Activated CD4-positive, alpha-beta T cell treated with anti-CD3 and anti-CD28 coated beads for 36 hours (primary cell): ENCODE measurements at regions of chr5 and their contacts with region 1.

Region 1: DNA sequence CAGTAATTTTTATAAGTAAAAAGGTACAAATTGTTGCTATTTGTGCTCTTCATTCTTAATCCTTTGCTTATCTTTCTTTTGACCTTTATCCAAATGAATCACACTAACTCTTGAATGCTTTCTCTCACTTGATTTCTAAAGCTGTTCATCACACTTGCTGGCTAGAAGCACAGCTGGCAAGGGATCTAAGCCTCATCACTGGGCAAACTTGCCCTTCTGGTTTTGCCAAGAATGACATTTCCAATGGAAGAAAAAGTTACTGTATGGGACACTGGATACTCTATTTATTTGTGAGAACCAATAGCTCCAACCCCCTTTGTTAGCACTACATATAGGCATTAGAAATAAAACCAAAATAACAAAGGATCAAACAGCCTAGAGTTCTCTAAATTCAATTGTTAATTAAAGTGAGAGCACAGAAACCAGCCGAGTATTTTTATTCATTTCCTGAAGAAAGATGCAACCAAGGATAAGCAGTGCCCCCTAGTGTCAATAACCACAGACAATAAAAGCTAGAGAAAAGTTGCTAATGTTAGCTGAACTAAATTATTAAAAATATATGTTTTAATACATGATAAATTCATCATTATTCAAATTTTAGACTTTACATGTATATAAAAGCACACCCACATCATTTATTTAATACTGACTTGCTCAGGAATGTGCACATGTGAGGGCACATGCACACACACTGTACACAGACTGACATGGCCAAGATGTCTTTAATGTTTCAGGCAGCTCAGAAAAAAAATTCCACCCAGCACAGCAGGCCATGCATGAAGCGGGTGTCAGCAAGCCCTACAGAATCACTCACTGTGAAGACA is 59.8 kb upstream of the POU5F2 start:
- DNase-seq: peak; percentile 11
- ATAC-seq: no peak
- H3K4me3 Mint-ChIP-seq: no peak overlapping the region
- H3K27ac Mint-ChIP-seq: no peak overlapping the region
- H3K4me1 Mint-ChIP-seq: no peaks in the 10 kb centered on the region
- H3K27me3 Mint-ChIP-seq: no peaks in the 10 kb centered on the region

Region 2: DNA sequence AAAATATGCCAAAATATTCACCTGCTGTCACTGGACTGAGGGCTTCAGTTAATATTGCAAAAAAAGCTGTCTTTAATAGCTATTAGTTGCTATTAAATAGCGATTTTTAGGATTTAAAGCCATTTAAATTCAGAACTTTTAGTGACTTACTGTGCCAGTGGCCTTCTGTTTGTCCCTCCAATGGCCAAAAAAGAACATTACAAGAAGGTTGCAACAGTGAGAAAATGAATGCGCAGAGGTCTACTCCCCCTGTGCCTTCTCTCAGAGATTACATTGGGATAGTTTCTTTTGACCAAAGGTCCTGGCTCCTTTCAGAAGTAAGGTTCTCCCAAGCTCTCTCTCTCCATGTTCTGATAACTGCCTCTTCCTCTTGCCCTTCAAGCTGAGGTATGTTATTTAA is 1487.8 kb before region 1 on chr5:
- CTCF ChIA-PET with region 1: no interaction called
- POLR2A ChIA-PET with region 1: no interaction called
- intact Hi-C with region 1: loop called in 1 of 2 experiments (anchors 10 kb)
- DNase-seq: no peak
- ATAC-seq: no peak
- H3K4me3 Mint-ChIP-seq: no peak overlapping the region
- H3K27ac Mint-ChIP-seq: no peak overlapping the region
- H3K4me1 Mint-ChIP-seq: no peaks in the 10 kb centered on the region
- H3K27me3 Mint-ChIP-seq: no peaks in the 10 kb centered on the region

Region 3: GRCh38 chr5:93510626-93511380 is 290.4 kb before region 1 on chr5:
- CTCF ChIA-PET with region 1: no interaction called
- POLR2A ChIA-PET with region 1: no interaction called
- intact Hi-C with region 1: loop called in 1 of 2 experiments (anchors 1 kb)
- DNase-seq: no peak
- ATAC-seq: no peak
- H3K4me3 Mint-ChIP-seq: no peak overlapping the region
- H3K27ac Mint-ChIP-seq: no peak overlapping the region
- H3K4me1 Mint-ChIP-seq: no peaks in the 10 kb centered on the region
- H3K27me3 Mint-ChIP-seq: peaks cover 12% of the 10 kb centered on the region

Region 4: DNA sequence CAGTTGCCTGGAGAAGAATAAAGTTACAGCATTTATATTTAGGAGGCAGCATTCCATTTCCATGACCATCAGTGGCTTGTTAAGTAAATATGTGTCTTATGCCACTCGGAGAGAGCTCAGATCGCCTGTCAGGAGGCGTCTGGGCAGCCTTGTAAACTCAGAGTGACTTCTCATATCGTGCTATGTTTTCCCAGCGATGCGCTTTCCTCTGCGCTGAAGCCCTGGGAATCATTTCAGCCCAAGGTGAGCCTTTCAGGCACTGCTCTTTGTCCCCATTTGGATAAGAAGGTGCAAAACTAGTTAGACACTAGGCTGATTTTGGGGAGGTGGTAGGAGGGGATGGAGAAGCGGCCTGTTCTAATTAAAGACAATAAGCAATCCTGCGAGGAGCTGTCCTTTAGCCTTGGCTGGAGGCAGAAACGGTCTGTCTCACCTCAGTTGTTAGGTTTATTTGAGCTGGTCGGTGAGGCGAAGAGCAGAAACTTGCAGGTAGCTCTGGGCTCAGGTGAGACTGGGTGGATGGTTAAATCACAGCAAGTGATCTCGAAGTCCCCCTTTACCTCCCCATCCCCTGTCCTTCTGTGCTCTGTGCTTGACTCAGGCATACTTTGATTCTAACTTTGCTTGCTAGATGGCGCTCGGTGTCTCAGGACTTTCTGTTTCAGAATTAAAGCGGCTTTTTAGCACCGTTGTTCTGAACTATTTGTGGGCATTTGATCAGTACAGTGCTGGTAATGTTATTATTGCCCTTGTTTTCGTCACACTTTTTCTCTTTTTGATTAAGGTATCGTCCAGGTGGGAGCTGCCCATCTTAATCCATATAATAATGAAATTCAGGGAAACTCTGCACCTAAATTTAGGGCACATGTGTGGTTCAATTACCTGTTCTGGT is 193.6 kb before region 1 on chr5:
- CTCF ChIA-PET with region 1: interaction called, 12 read pairs
- POLR2A ChIA-PET with region 1: no interaction called
- intact Hi-C with region 1: loop called (anchors 1 kb)
- DNase-seq: peak; percentile 53
- ATAC-seq: peak; percentile 81
- H3K4me3 Mint-ChIP-seq: no peak overlapping the region
- H3K27ac Mint-ChIP-seq: no peak overlapping the region
- H3K4me1 Mint-ChIP-seq: peaks cover 21% of the 10 kb centered on the region
- H3K27me3 Mint-ChIP-seq: peaks cover 82% of the 10 kb centered on the region

Region 5: DNA sequence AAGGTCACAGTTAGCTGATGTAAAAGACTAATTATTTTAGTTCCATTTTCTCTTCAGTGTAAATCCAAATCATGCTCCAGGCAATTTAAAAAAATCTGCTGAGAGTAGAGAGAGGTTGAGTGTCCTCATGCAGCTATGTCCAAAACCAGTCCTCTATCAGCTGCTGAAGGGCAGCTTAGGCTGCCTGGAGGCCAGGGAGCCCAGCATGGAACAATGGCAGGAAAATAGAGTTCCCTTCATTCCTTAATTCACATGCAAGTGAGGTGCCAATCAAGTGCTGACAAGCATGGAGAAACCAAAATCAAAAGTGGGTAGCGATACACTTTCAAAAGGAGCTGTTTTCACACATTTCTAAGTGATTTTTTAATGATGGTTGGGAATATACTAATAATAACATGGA is 18.5 kb after region 1 on chr5:
- CTCF ChIA-PET with region 1: interaction called, 11 read pairs
- POLR2A ChIA-PET with region 1: no interaction called
- intact Hi-C with region 1: no loop called
- DNase-seq: no peak
- ATAC-seq: no peak
- H3K4me3 Mint-ChIP-seq: no peak overlapping the region
- H3K27ac Mint-ChIP-seq: no peak overlapping the region
- H3K4me1 Mint-ChIP-seq: no peaks in the 10 kb centered on the region
- H3K27me3 Mint-ChIP-seq: no peaks in the 10 kb centered on the region

Region 6: DNA sequence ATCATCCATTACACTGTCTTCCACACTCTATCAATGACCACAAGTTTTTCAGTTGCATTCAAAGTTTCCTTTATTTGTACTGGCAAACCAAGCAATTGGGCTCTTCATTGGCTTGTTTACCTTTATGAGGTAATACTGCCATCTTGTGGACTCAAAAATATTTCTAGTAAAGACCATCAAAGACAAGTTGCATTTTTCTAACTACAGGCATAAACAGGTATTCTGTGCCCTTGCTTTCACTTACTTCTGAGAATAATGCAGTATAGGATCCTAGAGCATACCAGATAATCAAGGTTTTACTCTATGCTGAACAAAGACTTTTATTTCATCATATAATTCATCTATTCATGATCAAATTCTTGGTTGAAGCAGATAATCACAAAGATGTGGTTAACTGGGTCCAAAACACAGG is 113.9 kb after region 1 on chr5:
- CTCF ChIA-PET with region 1: interaction called, 3 read pairs
- POLR2A ChIA-PET with region 1: no interaction called
- intact Hi-C with region 1: loop called in 1 of 2 experiments (anchors 5 kb)
- DNase-seq: no peak
- ATAC-seq: peak; percentile 73
- H3K4me3 Mint-ChIP-seq: no peak overlapping the region
- H3K27ac Mint-ChIP-seq: no peak overlapping the region
- H3K4me1 Mint-ChIP-seq: no peaks in the 10 kb centered on the region
- H3K27me3 Mint-ChIP-seq: no peaks in the 10 kb centered on the region